B cell (primary cell): ENCODE measurements at regions of chr14 and their contacts with region 1.

Region 1: GRCh38 chr14:77124345-77125280 is 17.0 kb downstream of the ZDHHC22 start:
- DNase-seq: peak; percentile 89
- ATAC-seq: peak; percentile 42
- H3K4me3 ChIP-seq: peak overlapping the region; percentile 32 to 79 (median 73)
- H3K4me3 Mint-ChIP-seq: peak overlapping the region; percentile 93
- H3K27ac ChIP-seq: peak overlapping the region; percentile 39 to 93
- H3K27ac Mint-ChIP-seq: peak overlapping the region; percentile 94
- H3K4me1 ChIP-seq: peaks cover 54 to 60% of the 10 kb centered on the region in 2 donors
- H3K4me1 Mint-ChIP-seq: peaks cover 59% of the 10 kb centered on the region
- H3K27me3 ChIP-seq: peaks cover 0 to 28% (median 4%) of the 10 kb centered on the region in 4 experiments
- H3K27me3 Mint-ChIP-seq: peaks cover 12% of the 10 kb centered on the region
- CTCF ChIP-seq: peak; percentile 78

Region 2: GRCh38 chr14:76904740-76905438 is 219.7 kb before region 1 on chr14:
- CTCF ChIA-PET with region 1: interaction called, 4 read pairs
- POLR2A ChIA-PET with region 1: interaction called, 7 read pairs
- intact Hi-C with region 1: loop called (anchors 5 kb)
- DNase-seq: peak; percentile 91
- ATAC-seq: peak; percentile 83
- H3K4me3 ChIP-seq: peak overlapping the region in 1 of 5 experiments; percentile 36
- H3K4me3 Mint-ChIP-seq: peak overlapping the region; percentile 55
- H3K27ac ChIP-seq: peak overlapping the region; percentile 57 to 76
- H3K27ac Mint-ChIP-seq: peak overlapping the region; percentile 89
- H3K4me1 ChIP-seq: peaks cover 29 to 45% of the 10 kb centered on the region in 2 donors
- H3K4me1 Mint-ChIP-seq: peaks cover 34% of the 10 kb centered on the region
- H3K27me3 ChIP-seq: peaks cover 0 to 6% (median 0%) of the 10 kb centered on the region in 4 experiments
- H3K27me3 Mint-ChIP-seq: no peaks in the 10 kb centered on the region
- CTCF ChIP-seq: no peak

Region 3: GRCh38 chr14:77111043-77111442 is 13.6 kb before region 1 on chr14:
- CTCF ChIA-PET with region 1: interaction called, 757 read pairs
- POLR2A ChIA-PET with region 1: interaction called, 14 read pairs
- intact Hi-C with region 1: loop called (anchors 1 kb)
- DNase-seq: no peak
- ATAC-seq: no peak
- H3K4me3 ChIP-seq: no peak overlapping the region
- H3K4me3 Mint-ChIP-seq: no peak overlapping the region
- H3K27ac ChIP-seq: no peak overlapping the region
- H3K27ac Mint-ChIP-seq: peak overlapping the region; percentile 26
- H3K4me1 ChIP-seq: peaks cover 4 to 5% of the 10 kb centered on the region in 2 donors
- H3K4me1 Mint-ChIP-seq: peaks cover 25% of the 10 kb centered on the region
- H3K27me3 ChIP-seq: no peaks in the 10 kb centered on the region
- H3K27me3 Mint-ChIP-seq: no peaks in the 10 kb centered on the region
- CTCF ChIP-seq: no peak

Region 4: GRCh38 chr14:77314043-77314442 is 189.4 kb after region 1 on chr14:
- CTCF ChIA-PET with region 1: interaction called, 12 read pairs
- POLR2A ChIA-PET with region 1: no interaction called
- intact Hi-C with region 1: no loop called
- DNase-seq: no peak
- ATAC-seq: no peak
- H3K4me3 ChIP-seq: no peak overlapping the region
- H3K4me3 Mint-ChIP-seq: no peak overlapping the region
- H3K27ac ChIP-seq: no peak overlapping the region
- H3K27ac Mint-ChIP-seq: no peak overlapping the region
- H3K4me1 ChIP-seq: peaks cover 4 to 9% of the 10 kb centered on the region in 2 donors
- H3K4me1 Mint-ChIP-seq: peaks cover 4% of the 10 kb centered on the region
- H3K27me3 ChIP-seq: no peaks in the 10 kb centered on the region
- H3K27me3 Mint-ChIP-seq: no peaks in the 10 kb centered on the region
- CTCF ChIP-seq: no peak

Region 5: GRCh38 chr14:77376771-77377501 is 252.3 kb after region 1 on chr14 and contains the starts of genes SAMD15 and TMED8:
- CTCF ChIA-PET with region 1: interaction called, 3 read pairs
- POLR2A ChIA-PET with region 1: no interaction called
- intact Hi-C with region 1: loop called (anchors 1 kb)
- DNase-seq: peak; percentile 92
- ATAC-seq: peak; percentile 92
- H3K4me3 ChIP-seq: peak within 1 kb of the TSS; percentile 79 to 100 (median 93)
- H3K4me3 Mint-ChIP-seq: peak within 1 kb of the TSS; percentile 95
- H3K27ac ChIP-seq: peak within 1 kb of the TSS; percentile 18 to 85
- H3K27ac Mint-ChIP-seq: peak within 1 kb of the TSS; percentile 91
- H3K4me1 ChIP-seq: peaks cover 39 to 43% of the 10 kb centered on the region in 2 donors
- H3K4me1 Mint-ChIP-seq: peaks cover 40% of the 10 kb centered on the region
- H3K27me3 ChIP-seq: no peaks in the 10 kb centered on the region
- H3K27me3 Mint-ChIP-seq: no peaks in the 10 kb centered on the region
- CTCF ChIP-seq: peak; percentile 48
- total RNA-seq, gene SAMD15: 0.96 and 1.00 TPM in 2 replicates
- total RNA-seq, gene TMED8: 43.8 and 44.7 TPM in 2 replicates